ENCODE measurements at regions of chr14 and their contacts with region 1.

Region 1: GRCh38 chr14:24232121-24232644 is at the start of gene NEDD8:
- DNase-seq: peak; percentile 94 to 97 (median 96)
- H3K4me3 ChIP-seq: peak within 1 kb of the TSS; percentile 68 to 91 (median 77)
- H3K4me3 Mint-ChIP-seq: peak within 1 kb of the TSS; percentile 93 to 98
- H3K27ac ChIP-seq: peak within 1 kb of the TSS; percentile 88 to 91
- H3K27ac Mint-ChIP-seq: peak within 1 kb of the TSS; percentile 92 to 98 (median 97)
- H3K4me1 ChIP-seq: peaks cover 26 to 42% of the 10 kb centered on the region in 2 donors
- H3K4me1 Mint-ChIP-seq: peaks cover 41% of the 10 kb centered on the region
- H3K27me3 ChIP-seq: no peaks in the 10 kb centered on the region
- H3K27me3 Mint-ChIP-seq: no peaks in the 10 kb centered on the region
- CTCF ChIP-seq: no peak
- polyA plus RNA-seq, gene NEDD8: 164 to 335 (median 306) TPM

Region 2: DNA sequence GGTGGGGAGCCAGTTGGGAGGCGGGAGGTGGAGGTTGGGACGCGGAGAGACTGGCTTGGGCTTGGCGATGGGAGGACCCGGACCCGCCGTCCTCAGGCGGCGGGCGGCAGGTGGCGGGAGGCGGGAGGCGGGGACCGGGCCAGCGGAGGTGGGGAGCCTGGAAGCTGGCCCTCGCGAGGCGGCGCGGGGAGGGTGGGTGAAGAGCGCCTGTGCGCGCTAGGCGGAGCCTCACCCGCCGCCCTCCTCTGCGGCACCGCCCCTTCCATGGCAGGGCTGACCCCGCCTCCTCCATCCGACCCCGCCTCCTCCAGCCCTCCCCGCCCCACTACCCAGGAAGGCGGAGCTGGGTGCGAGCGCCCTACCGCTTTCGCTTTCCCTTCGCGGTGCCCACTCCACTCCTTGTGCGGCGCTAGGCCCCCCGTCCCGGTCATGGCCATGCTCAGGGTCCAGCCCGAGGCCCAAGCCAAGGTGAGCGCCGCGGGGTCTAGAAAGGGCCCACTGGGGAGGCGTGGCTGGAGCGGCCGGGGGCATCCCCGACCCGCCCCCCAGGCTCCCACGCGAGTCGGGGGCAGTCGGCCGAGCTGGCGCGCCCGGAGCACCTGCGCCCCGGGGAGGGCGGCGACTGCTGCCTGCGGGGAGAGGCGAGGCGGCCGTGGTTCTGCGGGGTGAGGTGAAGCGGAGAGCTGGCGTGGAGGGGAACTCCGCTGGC is 96.2 kb before region 1 on chr14 and contains the start of gene PSME1:
- intact Hi-C with region 1: loop called in 1 of 2 experiments (anchors 10 kb)
- DNase-seq: peak; percentile 86 to 89 (median 87)
- H3K4me3 ChIP-seq: peak within 1 kb of the TSS; percentile 68 to 97 (median 73)
- H3K4me3 Mint-ChIP-seq: peak within 1 kb of the TSS; percentile 88 to 94
- H3K27ac ChIP-seq: peak within 1 kb of the TSS; percentile 10 to 94
- H3K27ac Mint-ChIP-seq: peak within 1 kb of the TSS; percentile 83 to 94 (median 91)
- H3K4me1 ChIP-seq: peaks cover 35 to 44% of the 10 kb centered on the region in 2 donors
- H3K4me1 Mint-ChIP-seq: peaks cover 51% of the 10 kb centered on the region
- H3K27me3 ChIP-seq: no peaks in the 10 kb centered on the region
- H3K27me3 Mint-ChIP-seq: peaks cover 0 to 1% (median 0%) of the 10 kb centered on the region in 3 donors
- CTCF ChIP-seq: no peak
- polyA plus RNA-seq, gene PSME1: 435 to 759 (median 729) TPM

Region 3: GRCh38 chr14:24195191-24196070 is 36.8 kb before region 1 on chr14 and contains the start of gene TM9SF1:
- intact Hi-C with region 1: loop called (anchors 5 kb)
- DNase-seq: peak; percentile 77 to 87 (median 83)
- H3K4me3 ChIP-seq: peak within 1 kb of the TSS; percentile 79 to 87 (median 86)
- H3K4me3 Mint-ChIP-seq: peak within 1 kb of the TSS; percentile 95 to 97
- H3K27ac ChIP-seq: peak within 1 kb of the TSS; percentile 77 to 94
- H3K27ac Mint-ChIP-seq: peak within 1 kb of the TSS; percentile 94 to 97 (median 96)
- H3K4me1 ChIP-seq: peaks cover 23 to 31% of the 10 kb centered on the region in 2 donors
- H3K4me1 Mint-ChIP-seq: peaks cover 42% of the 10 kb centered on the region
- H3K27me3 ChIP-seq: no peaks in the 10 kb centered on the region
- H3K27me3 Mint-ChIP-seq: no peaks in the 10 kb centered on the region
- CTCF ChIP-seq: no peak
- polyA plus RNA-seq, gene TM9SF1: 14.6 to 56.0 (median 51.1) TPM

Region 4: DNA sequence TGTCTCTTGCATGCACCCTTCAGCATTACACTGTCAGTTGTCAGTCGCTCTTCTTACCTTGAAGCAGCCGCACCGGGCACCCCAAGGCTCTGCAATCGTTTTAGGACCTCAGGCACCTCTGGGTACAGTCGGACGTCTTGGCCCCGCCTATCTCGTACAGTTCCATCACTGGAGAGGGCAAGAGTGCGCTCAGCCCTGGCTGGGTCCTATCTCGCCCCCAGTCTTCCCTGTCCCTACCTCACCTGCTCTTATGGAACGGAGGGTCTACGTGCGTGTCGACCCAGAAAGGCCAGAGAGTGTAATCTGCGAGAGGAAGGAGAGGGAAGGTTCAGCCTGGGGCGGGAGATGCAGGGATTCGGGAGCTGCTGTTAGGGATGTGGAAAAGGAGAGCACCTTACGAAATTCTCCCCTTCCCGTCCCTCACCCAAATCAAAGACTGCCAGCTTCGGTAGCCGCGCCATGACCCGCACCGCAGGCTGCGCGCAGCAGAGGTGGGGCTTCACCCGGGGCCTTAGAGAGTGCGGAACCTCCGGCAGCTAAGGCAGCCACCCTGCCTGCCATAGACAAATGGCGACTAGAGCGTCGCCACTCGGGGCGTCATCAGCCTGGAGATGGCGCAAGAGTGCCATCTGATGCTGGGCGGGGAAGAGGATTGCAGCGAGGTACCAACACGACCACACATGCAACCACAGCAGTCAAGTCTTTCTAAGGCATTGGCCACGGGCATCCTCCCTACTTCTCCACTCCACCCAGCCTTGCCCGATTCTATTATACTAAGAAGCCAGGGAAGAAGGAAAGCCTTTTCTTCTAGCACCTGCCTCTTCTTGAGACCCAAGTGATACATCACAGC is 16.5 kb before region 1 on chr14 and contains the start of gene MDP1:
- intact Hi-C with region 1: loop called in 1 of 2 experiments (anchors 1 kb)
- DNase-seq: peak; percentile 91 to 92 (median 91)
- H3K4me3 ChIP-seq: peak within 1 kb of the TSS; percentile 71 to 90 (median 77)
- H3K4me3 Mint-ChIP-seq: peak within 1 kb of the TSS; percentile 86 to 93
- H3K27ac ChIP-seq: peak within 1 kb of the TSS; percentile 87 to 98
- H3K27ac Mint-ChIP-seq: peak within 1 kb of the TSS; percentile 95 to 100 (median 98)
- H3K4me1 ChIP-seq: peaks cover 30 to 36% of the 10 kb centered on the region in 2 donors
- H3K4me1 Mint-ChIP-seq: peaks cover 31% of the 10 kb centered on the region
- H3K27me3 ChIP-seq: no peaks in the 10 kb centered on the region
- H3K27me3 Mint-ChIP-seq: peaks cover 0 to 4% (median 1%) of the 10 kb centered on the region in 3 donors
- CTCF ChIP-seq: peak; percentile 50
- polyA plus RNA-seq, gene MDP1: 17.5 to 49.6 (median 37.5) TPM

Region 5: DNA sequence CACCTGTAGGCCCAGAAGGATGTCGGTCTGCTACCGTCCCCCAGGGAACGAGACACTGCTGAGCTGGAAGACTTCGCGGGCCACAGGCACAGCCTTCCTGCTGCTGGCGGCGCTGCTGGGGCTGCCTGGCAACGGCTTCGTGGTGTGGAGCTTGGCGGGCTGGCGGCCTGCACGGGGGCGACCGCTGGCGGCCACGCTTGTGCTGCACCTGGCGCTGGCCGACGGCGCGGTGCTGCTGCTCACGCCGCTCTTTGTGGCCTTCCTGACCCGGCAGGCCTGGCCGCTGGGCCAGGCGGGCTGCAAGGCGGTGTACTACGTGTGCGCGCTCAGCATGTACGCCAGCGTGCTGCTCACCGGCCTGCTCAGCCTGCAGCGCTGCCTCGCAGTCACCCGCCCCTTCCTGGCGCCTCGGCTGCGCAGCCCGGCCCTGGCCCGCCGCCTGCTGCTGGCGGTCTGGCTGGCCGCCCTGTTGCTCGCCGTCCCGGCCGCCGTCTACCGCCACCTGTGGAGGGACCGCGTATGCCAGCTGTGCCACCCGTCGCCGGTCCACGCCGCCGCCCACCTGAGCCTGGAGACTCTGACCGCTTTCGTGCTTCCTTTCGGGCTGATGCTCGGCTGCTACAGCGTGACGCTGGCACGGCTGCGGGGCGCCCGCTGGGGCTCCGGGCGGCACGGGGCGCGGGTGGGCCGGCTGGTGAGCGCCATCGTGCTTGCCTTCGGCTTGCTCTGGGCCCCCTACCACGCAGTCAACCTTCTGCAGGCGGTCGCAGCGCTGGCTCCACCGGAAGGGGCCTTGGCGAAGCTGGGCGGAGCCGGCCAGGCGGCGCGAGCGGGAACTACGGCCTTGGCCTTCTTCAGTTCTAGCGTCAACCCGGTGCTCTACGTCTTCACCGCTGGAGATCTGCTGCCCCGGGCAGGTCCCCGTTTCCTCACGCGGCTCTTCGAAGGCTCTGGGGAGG is 78.7 kb after region 1 on chr14 and contains the start of gene LTB4R:
- intact Hi-C with region 1: loop called in 1 of 2 experiments (anchors 5 kb)
- DNase-seq: peak; percentile 41 to 68 (median 55)
- H3K4me3 ChIP-seq: peak within 1 kb of the TSS; percentile 51 to 84 (median 57)
- H3K4me3 Mint-ChIP-seq: peak within 1 kb of the TSS; percentile 81 to 95
- H3K27ac ChIP-seq: peak within 1 kb of the TSS; percentile 85 to 89
- H3K27ac Mint-ChIP-seq: peak within 1 kb of the TSS; percentile 95 to 99 (median 98)
- H3K4me1 ChIP-seq: peaks cover 78 to 85% of the 10 kb centered on the region in 2 donors
- H3K4me1 Mint-ChIP-seq: peaks cover 81% of the 10 kb centered on the region
- H3K27me3 ChIP-seq: no peaks in the 10 kb centered on the region
- H3K27me3 Mint-ChIP-seq: no peaks in the 10 kb centered on the region
- CTCF ChIP-seq: peak; percentile 45
- polyA plus RNA-seq, gene LTB4R: 51.5 to 98.5 (median 87.3) TPM

Region 6: GRCh38 chr14:24442273-24443052 is 210.3 kb after region 1 on chr14 and contains the start of gene SDR39U1:
- intact Hi-C with region 1: loop called in 1 of 2 experiments (anchors 5 kb)
- DNase-seq: peak; percentile 98 to 99 (median 99)
- H3K4me3 ChIP-seq: peak within 1 kb of the TSS; percentile 78 to 83 (median 82)
- H3K4me3 Mint-ChIP-seq: peak within 1 kb of the TSS; percentile 87 to 95
- H3K27ac ChIP-seq: peak within 1 kb of the TSS; percentile 95 to 99
- H3K27ac Mint-ChIP-seq: peak within 1 kb of the TSS; percentile 98 to 99 (median 98)
- H3K4me1 ChIP-seq: peaks cover 36 to 57% of the 10 kb centered on the region in 2 donors
- H3K4me1 Mint-ChIP-seq: peaks cover 49% of the 10 kb centered on the region
- H3K27me3 ChIP-seq: no peaks in the 10 kb centered on the region
- H3K27me3 Mint-ChIP-seq: peaks cover 0 to 3% (median 0%) of the 10 kb centered on the region in 3 donors
- CTCF ChIP-seq: no peak
- polyA plus RNA-seq, gene SDR39U1: 37.3 to 110 (median 39.2) TPM